A673 (cell line): ENCODE measurements at regions of chr5 and their contacts with region 1.

Region 1: DNA sequence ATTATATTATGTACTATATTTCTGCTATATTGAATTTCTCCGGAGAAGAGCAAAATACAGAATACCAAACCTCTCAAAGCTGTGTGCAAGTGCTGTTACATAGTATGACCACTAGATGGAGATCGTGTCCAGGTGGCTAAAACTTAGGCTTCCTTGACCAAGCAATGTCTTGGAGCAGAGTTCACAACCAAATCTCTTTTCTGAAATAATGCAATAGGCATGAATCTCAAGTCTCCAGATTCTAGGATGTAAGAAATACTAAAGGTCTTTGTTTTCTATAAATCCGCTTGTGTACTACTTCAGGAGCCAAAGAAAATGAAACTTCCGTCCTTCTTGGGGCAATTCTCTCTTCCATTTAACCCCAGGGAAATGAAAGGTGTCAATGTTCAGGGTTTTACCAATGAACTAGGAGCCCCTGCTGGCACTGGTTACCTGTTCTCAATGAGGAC is 181.5 kb upstream of the RAI14 start:
- DNase-seq: peak; percentile 61
- H3K4me3 ChIP-seq: no peak overlapping the region
- H3K27ac ChIP-seq: no peak overlapping the region
- H3K4me1 ChIP-seq: no peaks in the 10 kb centered on the region
- H3K27me3 ChIP-seq: no peaks in the 10 kb centered on the region
- CTCF ChIP-seq: peak; percentile 90

Region 2: DNA sequence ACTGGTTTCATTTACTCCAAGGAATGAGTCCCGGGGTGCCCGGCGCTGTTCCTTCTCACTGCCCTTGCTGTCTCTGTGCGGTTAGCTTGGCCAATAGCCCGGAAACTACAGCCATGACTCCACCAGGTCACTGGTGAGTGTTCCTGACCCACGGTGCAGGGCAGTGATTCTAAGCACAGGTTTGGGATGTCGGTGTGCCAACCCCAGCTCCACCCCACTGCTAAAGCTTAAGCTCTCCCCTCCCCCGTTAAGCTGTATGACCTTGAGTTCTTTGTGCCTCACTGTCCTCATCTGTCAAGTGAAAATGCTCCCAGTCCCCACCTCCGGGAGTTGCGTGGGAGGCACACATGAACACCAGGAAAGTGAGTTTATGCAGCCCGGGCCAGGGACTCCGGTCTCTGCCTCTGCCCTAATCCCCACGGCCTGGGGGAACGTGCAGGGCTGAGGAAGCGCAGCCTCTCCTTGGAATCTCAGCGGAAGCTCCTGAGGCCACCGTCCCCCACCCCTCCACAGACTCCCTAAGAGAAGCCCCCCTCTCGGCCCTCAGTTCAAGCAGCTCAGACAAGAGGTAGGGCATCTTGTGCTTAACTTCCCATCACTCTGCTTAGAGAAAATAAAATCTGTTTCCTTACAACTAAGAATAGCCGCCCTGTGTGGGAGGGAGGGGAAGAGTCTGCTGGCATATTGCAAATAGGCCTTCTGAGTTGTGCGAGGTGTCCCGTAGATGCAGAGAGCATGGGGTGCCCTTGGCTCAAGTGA is 89.5 kb after region 1 on chr5:
- CTCF ChIA-PET with region 1: no interaction called
- POLR2A ChIA-PET with region 1: no interaction called
- intact Hi-C with region 1: no loop called
- DNase-seq: no peak
- H3K4me3 ChIP-seq: no peak overlapping the region
- H3K27ac ChIP-seq: no peak overlapping the region
- H3K4me1 ChIP-seq: no peaks in the 10 kb centered on the region
- H3K27me3 ChIP-seq: no peaks in the 10 kb centered on the region
- CTCF ChIP-seq: no peak

Region 3: DNA sequence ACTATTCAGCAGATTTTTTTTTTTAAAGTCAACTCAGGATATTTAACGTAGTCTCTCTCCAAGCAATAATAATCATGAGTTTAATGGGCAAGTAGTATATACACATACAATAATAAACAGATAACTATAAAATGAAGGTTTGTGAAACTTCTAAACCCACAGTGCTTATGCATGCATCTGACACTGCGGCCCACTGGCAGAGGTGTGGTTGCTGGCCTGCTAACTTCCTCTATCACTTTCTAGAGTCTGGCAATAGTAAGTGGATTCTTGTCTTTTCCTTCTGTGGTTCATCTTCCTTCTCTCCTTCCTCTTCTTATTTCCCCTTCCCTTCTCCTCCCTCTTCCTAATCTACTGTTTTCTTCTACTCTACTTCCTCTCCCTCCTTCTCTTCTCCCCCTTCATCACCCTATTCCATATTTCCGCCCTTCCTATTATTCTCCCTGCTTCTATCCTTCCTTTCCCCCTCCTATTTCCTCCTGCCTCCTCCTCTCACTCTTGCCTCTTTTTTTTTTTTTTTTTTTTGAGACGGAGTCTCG is 591.7 kb after region 1 on chr5:
- CTCF ChIA-PET with region 1: no interaction called
- POLR2A ChIA-PET with region 1: no interaction called
- intact Hi-C with region 1: no loop called
- DNase-seq: no peak
- H3K4me3 ChIP-seq: no peak overlapping the region
- H3K27ac ChIP-seq: no peak overlapping the region
- H3K4me1 ChIP-seq: no peaks in the 10 kb centered on the region
- H3K27me3 ChIP-seq: peaks cover 18% of the 10 kb centered on the region
- CTCF ChIP-seq: no peak

Region 4: GRCh38 chr5:35182541-35183535 is 708.2 kb after region 1 on chr5:
- CTCF ChIA-PET with region 1: no interaction called
- POLR2A ChIA-PET with region 1: no interaction called
- intact Hi-C with region 1: loop called (anchors 10 kb)
- DNase-seq: peak; percentile 72
- H3K4me3 ChIP-seq: no peak overlapping the region
- H3K27ac ChIP-seq: no peak overlapping the region
- H3K4me1 ChIP-seq: no peaks in the 10 kb centered on the region
- H3K27me3 ChIP-seq: peaks cover 5% of the 10 kb centered on the region
- CTCF ChIP-seq: peak; percentile 71

Region 5: GRCh38 chr5:36168737-36169136 is 1694.1 kb after region 1 on chr5:
- CTCF ChIA-PET with region 1: no interaction called
- POLR2A ChIA-PET with region 1: no interaction called
- intact Hi-C with region 1: no loop called
- DNase-seq: no peak
- H3K4me3 ChIP-seq: no peak overlapping the region
- H3K27ac ChIP-seq: no peak overlapping the region
- H3K4me1 ChIP-seq: peaks cover 4% of the 10 kb centered on the region
- H3K27me3 ChIP-seq: no peaks in the 10 kb centered on the region
- CTCF ChIP-seq: no peak